ENCODE measurements at regions of chr9 and their contacts with region 1.

Region 1: DNA sequence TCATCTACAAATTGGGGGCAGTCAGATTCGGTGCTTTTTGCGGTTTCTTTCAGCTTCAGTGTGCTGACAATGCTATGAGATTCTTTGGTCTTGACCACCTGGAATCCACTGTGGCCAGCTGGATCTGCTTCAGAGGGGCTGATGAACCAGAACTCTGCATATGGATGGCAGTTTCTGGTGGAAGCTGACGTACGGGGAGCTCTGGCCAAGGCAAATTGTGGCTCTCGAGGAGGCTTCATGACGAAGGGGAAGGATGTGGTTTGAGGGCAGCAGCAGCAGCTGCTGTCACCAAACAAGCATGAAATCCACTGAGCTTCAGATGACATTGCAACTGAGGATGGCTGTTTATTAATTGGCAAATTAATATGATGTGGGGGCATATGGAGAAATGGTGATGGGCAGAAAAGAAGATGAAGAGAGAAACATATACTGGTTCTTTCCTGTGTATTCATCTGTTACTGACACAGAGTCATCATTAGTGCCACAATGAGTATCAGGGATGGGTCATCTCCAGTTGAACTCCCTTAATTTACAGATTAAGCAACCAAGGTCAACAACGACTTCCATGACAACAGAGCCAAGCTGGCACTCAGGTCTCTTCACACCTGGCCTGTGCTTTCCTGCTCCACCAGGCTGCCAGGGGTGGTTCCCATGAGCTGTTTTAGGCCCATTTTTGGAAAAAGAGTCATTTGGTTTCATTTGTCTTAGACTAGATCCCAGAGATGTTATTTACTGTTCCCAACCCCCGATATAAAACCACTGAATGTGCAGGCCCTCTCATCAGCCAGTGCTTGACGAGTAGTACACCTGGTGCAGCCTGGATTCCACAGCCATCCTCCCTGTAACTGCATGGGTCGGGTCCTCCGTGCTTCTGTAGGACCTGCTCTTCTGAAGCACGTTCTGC is 134.7 kb downstream of the AOPEP start:
- DNase-seq: no peak

Region 2: GRCh38 chr9:94805585-94805984 is 55.6 kb before region 1 on chr9:
- intact Hi-C with region 1: loop called (anchors 10 kb)
- DNase-seq: no peak

Region 3: DNA sequence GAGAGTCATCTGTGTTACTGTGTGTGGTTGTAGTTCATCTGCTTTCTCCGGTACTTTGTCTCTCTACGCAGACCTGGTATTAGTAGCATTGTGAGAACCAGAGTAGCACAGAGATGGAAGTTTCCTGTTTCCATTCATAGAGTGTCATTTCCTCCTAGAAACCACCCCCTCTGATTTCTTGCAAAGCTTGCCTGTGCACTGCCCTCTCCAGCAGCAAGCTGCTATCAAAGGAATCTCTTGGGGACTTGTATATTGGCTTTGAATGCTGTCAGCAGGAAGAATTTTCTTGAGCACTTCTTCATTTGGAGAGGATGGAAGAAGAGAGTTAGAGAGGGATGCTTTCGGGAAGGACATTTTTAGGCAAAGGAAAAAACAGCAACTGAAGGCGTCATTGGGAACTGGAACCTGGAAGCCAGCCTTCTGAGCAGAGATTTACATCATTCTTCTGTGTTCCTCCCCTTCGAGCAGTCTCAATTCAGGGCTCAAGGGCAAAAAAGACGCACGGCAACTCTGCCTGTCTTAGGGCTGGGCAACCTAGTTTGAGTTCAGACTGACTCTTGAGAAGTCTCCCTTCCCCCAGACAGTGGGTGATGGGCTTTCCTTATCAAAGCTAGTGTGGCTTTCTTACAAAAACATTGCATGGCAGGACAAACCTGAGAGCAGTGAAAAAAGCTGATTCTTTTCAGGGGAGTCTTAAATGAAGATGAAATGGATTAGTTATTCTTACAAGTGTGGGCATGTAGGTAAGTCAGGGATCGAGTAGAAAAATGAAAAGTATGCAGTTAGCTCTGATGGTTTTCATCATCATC is 91.5 kb after region 1 on chr9:
- intact Hi-C with region 1: no loop called
- DNase-seq: peak in 1 of 10 donors; percentile 73

Measured in posterior cingulate gyrus (tissue), 11 donors.